Activated CD4-positive, alpha-beta T cell treated with anti-CD3 and anti-CD28 coated beads, Interleukin-2, amount 10 ng/mL, durations not matched to agents 24 days and 14 days (primary cell): ENCODE measurements at regions of chr12 and their contacts with region 1.

Region 1: GRCh38 chr12:75977952-75978671 is 53.5 kb downstream of the PHLDA1 start:
- DNase-seq: peak; percentile 94
- H3K4me3 Mint-ChIP-seq: peak overlapping the region; percentile 69
- H3K27ac Mint-ChIP-seq: peak overlapping the region; percentile 100
- H3K4me1 Mint-ChIP-seq: peaks cover 54% of the 10 kb centered on the region
- H3K27me3 Mint-ChIP-seq: no peaks in the 10 kb centered on the region

Region 2: GRCh38 chr12:75480469-75480949 is 497.6 kb before region 1 on chr12 and contains the start of gene GLIPR1:
- intact Hi-C with region 1: loop called (anchors 2 kb)
- DNase-seq: peak; percentile 92
- H3K4me3 Mint-ChIP-seq: peak within 1 kb of the TSS; percentile 77
- H3K27ac Mint-ChIP-seq: peak within 1 kb of the TSS; percentile 91
- H3K4me1 Mint-ChIP-seq: peaks cover 67% of the 10 kb centered on the region
- H3K27me3 Mint-ChIP-seq: peaks cover 2% of the 10 kb centered on the region
- total RNA-seq, gene GLIPR1: 4.3 and 5.3 TPM in 2 replicates

Region 3: GRCh38 chr12:75722714-75723200 is 255.4 kb before region 1 on chr12:
- intact Hi-C with region 1: loop called (anchors 5 kb)
- DNase-seq: peak; percentile 82
- H3K4me3 Mint-ChIP-seq: peak overlapping the region; percentile 34
- H3K27ac Mint-ChIP-seq: peak overlapping the region; percentile 83
- H3K4me1 Mint-ChIP-seq: peaks cover 20% of the 10 kb centered on the region
- H3K27me3 Mint-ChIP-seq: peaks cover 7% of the 10 kb centered on the region

Region 4: DNA sequence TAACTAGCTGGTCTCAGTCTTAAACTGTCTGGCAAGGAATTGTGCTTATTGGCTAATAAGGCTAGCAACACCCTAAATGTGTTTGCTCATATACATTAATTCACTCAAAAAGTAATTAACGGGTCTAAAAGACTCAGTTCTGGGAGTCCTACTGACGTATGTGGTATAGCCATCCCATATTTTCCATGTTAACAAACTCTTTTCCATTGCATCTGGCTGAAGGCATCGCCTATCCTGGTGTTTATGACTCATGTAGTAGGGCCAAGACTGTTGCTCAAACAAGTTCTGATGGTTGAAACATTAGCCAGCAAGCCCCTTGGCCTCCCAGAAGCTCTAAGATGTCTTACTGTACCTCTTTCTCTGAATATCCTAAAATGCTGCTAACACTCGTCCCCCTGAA is 45.0 kb before region 1 on chr12:
- intact Hi-C with region 1: loop called (anchors 1 kb)
- DNase-seq: no peak
- H3K4me3 Mint-ChIP-seq: no peak overlapping the region
- H3K27ac Mint-ChIP-seq: no peak overlapping the region
- H3K4me1 Mint-ChIP-seq: peaks cover 45% of the 10 kb centered on the region
- H3K27me3 Mint-ChIP-seq: no peaks in the 10 kb centered on the region

Region 5: GRCh38 chr12:75994186-75994731 is 16.1 kb after region 1 on chr12:
- intact Hi-C with region 1: loop called (anchors 1 kb)
- DNase-seq: peak; percentile 71
- H3K4me3 Mint-ChIP-seq: peak overlapping the region; percentile 4
- H3K27ac Mint-ChIP-seq: peak overlapping the region; percentile 90
- H3K4me1 Mint-ChIP-seq: peaks cover 24% of the 10 kb centered on the region
- H3K27me3 Mint-ChIP-seq: no peaks in the 10 kb centered on the region

Region 6: GRCh38 chr12:76083904-76084862 is 106.1 kb after region 1 on chr12 and contains the start of gene NAP1L1:
- intact Hi-C with region 1: loop called (anchors 2 kb)
- DNase-seq: peak; percentile 99
- H3K4me3 Mint-ChIP-seq: peak within 1 kb of the TSS; percentile 100
- H3K27ac Mint-ChIP-seq: peak within 1 kb of the TSS; percentile 100
- H3K4me1 Mint-ChIP-seq: peaks cover 42% of the 10 kb centered on the region
- H3K27me3 Mint-ChIP-seq: no peaks in the 10 kb centered on the region
- total RNA-seq, gene NAP1L1: 652 and 689 TPM in 2 replicates